A673 (cell line): ENCODE measurements at regions of chr17 and their contacts with region 1.

Region 1: DNA sequence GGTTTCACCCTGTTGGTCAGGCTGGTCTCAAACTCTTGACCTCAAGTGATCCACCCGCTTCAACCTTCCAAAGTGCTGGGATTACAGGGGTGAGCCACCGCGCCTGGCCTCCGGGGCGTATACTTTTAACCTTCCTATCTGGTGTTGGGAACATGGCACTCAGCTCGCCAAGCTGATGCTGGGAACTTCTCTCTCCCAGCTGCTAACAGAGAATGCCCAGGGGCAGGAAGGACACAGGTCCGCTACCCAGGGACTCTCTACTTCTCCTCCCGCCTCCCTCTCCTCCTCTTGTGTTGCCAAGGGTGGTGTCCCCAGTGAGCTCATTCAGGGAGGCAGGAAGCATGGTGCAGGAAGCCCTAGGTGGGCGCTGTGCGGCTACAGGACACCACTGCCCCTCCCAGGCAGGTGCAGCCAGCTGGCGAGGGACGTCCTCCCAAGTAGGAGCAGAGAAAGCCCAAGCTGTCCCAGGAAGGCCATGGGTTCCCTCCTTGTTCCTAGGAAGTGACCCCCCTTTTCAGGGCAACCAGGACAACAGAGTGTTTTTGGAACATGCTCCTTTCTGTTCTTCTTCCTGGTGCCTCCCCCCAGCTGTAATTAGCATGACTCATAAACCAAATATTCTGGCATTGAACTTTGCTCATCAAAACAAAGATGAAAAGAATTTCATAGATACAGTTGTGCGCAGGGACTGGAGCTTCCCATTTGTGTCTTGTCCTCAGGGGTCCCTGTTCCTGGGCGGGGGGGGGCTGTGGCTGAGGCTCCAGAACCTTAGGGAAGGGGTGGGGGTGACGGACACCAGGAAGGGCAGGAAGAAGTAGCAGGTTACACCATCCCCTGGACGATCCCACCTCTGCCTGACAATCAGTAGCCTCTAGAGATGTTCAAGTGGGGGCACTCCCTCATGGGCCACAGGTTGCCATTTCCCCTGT is 2.6 kb downstream of the C1QTNF1 start:
- DNase-seq: peak; percentile 71
- H3K4me3 ChIP-seq: no peak overlapping the region
- H3K27ac ChIP-seq: no peak overlapping the region
- H3K4me1 ChIP-seq: peaks cover 38% of the 10 kb centered on the region
- H3K27me3 ChIP-seq: no peaks in the 10 kb centered on the region
- CTCF ChIP-seq: no peak

Region 2: DNA sequence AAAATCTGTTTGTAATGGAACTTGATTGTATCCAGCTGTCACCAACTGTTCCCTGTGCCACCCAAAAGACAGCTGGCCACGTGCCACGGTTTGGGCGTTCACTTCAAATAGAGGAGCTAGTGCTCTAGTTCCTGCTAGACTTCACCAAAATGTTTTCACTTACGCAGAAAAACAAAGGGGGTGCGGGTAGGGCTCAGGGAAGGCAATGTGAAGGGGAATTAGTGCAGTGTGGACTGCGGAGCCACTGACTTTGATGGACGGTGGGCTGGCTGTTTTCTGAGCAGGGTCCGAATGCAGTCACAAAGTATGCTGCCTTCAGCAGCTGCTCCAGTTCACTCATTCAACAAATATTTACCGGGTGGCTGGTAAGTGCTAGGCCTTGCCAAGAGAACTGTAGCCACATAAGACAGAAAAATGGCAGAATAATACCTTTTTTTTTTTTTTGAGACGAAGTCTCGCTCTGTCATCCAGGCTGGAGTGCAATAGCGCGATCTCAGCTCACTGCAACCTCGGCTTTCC is 236.9 kb before region 1 on chr17:
- CTCF ChIA-PET with region 1: no interaction called
- POLR2A ChIA-PET with region 1: no interaction called
- intact Hi-C with region 1: no loop called
- DNase-seq: no peak
- H3K4me3 ChIP-seq: no peak overlapping the region
- H3K27ac ChIP-seq: peak overlapping the region; percentile 63
- H3K4me1 ChIP-seq: peaks cover 28% of the 10 kb centered on the region
- H3K27me3 ChIP-seq: no peaks in the 10 kb centered on the region
- CTCF ChIP-seq: no peak

Region 3: DNA sequence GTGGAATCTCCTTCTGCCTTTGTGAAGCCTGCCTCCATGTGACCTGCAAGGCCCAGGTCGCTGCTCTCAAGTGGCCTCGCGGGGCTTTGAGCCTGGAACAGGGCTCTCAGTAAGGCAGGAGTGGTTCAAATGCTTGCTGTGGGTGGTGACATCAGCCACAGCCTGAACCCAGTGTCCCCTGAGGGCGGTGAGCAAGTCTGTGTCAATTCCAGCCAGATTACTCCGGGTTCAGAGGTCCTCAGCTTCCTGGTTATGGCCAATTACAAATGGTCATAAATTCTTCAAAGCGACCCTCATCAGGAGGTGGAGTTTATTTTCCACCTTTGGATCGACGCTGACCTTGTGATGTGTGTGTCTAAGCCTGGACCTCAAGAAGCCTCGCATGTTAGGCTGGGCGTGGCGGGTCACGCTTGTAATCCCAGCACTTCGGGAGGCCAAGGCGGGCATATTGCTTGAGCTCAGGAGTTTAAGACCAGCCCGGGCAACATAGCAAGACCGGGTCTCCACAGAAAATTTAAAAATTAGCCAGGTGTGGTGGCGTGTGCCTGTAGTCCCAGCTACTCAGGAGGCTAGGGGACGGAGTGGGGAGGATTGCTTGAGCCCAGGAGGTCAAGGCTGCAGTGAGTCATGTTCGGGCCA is 64.1 kb before region 1 on chr17:
- CTCF ChIA-PET with region 1: interaction called, 20 read pairs
- POLR2A ChIA-PET with region 1: interaction called, 4 read pairs
- intact Hi-C with region 1: no loop called
- DNase-seq: no peak
- H3K4me3 ChIP-seq: no peak overlapping the region
- H3K27ac ChIP-seq: no peak overlapping the region
- H3K4me1 ChIP-seq: no peaks in the 10 kb centered on the region
- H3K27me3 ChIP-seq: no peaks in the 10 kb centered on the region
- CTCF ChIP-seq: no peak